CD14-positive monocyte (primary cell): ENCODE measurements at regions of chr16 and their contacts with region 1.

Region 1: DNA sequence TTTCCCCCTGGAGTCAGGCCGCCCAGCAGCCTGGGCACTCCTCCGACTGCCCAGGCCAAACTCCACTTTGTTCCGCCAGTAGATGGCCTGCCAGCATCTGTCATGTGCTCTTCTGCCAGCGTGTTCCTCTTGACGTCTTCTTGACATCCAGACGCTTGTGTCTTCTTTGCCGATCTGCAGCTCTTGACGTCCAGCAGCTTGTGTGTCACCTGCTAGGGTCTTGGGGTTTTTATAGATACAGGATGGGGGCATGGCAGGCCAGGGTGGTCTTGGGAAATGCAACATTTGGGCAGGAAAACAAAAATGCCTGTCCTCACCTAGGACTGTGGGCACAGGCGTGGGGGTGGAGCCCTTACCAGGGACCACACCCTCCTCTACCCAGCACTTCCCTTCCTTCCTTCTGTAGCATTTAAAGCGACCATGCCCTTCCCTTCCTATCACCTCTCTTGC is 88.7 kb downstream of the BMERB1 start:
- DNase-seq: peak; percentile 70 to 78 (median 76)
- H3K4me3 ChIP-seq: peak overlapping the region; percentile 18 to 58 (median 22)
- H3K4me3 Mint-ChIP-seq: peak overlapping the region; percentile 78 to 88
- H3K27ac ChIP-seq: peak overlapping the region; percentile 31 to 71
- H3K27ac Mint-ChIP-seq: peak overlapping the region; percentile 85 to 98 (median 96)
- H3K4me1 ChIP-seq: peaks cover 57 to 62% of the 10 kb centered on the region in 2 donors
- H3K4me1 Mint-ChIP-seq: peaks cover 60% of the 10 kb centered on the region
- H3K27me3 ChIP-seq: no peaks in the 10 kb centered on the region
- H3K27me3 Mint-ChIP-seq: peaks cover 9 to 13% (median 11%) of the 10 kb centered on the region in 3 donors
- CTCF ChIP-seq: peak; percentile 58

Region 2: GRCh38 chr16:15592324-15592723 is 69.2 kb after region 1 on chr16:
- intact Hi-C with region 1: loop called (anchors 5 to 10 kb)
- DNase-seq: peak; percentile 22 to 41 (median 28)
- H3K4me3 ChIP-seq: peak overlapping the region in 1 of 3 experiments; percentile 26
- H3K4me3 Mint-ChIP-seq: no peak overlapping the region
- H3K27ac ChIP-seq: peak overlapping the region; percentile 63 to 82
- H3K27ac Mint-ChIP-seq: peak overlapping the region; percentile 90 to 99 (median 94)
- H3K4me1 ChIP-seq: peaks cover 74 to 80% of the 10 kb centered on the region in 2 donors
- H3K4me1 Mint-ChIP-seq: peaks cover 78% of the 10 kb centered on the region
- H3K27me3 ChIP-seq: no peaks in the 10 kb centered on the region
- H3K27me3 Mint-ChIP-seq: no peaks in the 10 kb centered on the region
- CTCF ChIP-seq: no peak

Region 3: GRCh38 chr16:15704545-15704987 is 181.4 kb after region 1 on chr16:
- intact Hi-C with region 1: loop called (anchors 10 kb)
- DNase-seq: peak; percentile 51 to 65 (median 61)
- H3K4me3 ChIP-seq: no peak overlapping the region
- H3K4me3 Mint-ChIP-seq: no peak overlapping the region
- H3K27ac ChIP-seq: peak overlapping the region in 1 of 2 donors; percentile 4
- H3K27ac Mint-ChIP-seq: peak overlapping the region in 2 of 7 donors; percentile 7 to 24
- H3K4me1 ChIP-seq: no peaks in the 10 kb centered on the region
- H3K4me1 Mint-ChIP-seq: peaks cover 2% of the 10 kb centered on the region
- H3K27me3 ChIP-seq: no peaks in the 10 kb centered on the region
- H3K27me3 Mint-ChIP-seq: peaks cover 0 to 3% (median 2%) of the 10 kb centered on the region in 3 donors
- CTCF ChIP-seq: peak; percentile 89